ENCODE measurements at regions of chr6 and their contacts with region 1.

Region 1: GRCh38 chr6:157013649-157014304 is 236.6 kb downstream of the ARID1B start:
- DNase-seq: no peak
- ATAC-seq: no peak

Region 2: DNA sequence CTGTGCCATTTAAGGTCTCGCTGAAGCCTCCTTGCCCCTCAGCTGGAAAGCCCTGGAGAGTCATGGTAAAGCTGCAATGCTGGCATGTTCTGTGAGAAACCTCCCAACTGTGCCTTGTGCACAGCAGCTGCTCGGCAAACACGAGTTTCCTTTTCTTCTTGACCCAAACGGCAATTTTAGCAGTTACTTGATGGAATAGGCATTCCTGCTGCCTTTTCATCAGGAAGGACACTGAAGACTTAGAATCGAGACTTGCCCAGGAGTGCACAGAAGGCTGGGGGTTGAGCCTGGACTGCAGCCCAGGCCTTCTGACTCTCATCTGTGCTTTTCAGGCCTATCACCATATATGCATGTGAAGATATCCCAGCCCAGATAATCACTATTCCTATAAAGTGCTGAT is 1778.7 kb before region 1 on chr6:
- intact Hi-C with region 1: no loop called
- DNase-seq: no peak
- ATAC-seq: no peak

Region 3: DNA sequence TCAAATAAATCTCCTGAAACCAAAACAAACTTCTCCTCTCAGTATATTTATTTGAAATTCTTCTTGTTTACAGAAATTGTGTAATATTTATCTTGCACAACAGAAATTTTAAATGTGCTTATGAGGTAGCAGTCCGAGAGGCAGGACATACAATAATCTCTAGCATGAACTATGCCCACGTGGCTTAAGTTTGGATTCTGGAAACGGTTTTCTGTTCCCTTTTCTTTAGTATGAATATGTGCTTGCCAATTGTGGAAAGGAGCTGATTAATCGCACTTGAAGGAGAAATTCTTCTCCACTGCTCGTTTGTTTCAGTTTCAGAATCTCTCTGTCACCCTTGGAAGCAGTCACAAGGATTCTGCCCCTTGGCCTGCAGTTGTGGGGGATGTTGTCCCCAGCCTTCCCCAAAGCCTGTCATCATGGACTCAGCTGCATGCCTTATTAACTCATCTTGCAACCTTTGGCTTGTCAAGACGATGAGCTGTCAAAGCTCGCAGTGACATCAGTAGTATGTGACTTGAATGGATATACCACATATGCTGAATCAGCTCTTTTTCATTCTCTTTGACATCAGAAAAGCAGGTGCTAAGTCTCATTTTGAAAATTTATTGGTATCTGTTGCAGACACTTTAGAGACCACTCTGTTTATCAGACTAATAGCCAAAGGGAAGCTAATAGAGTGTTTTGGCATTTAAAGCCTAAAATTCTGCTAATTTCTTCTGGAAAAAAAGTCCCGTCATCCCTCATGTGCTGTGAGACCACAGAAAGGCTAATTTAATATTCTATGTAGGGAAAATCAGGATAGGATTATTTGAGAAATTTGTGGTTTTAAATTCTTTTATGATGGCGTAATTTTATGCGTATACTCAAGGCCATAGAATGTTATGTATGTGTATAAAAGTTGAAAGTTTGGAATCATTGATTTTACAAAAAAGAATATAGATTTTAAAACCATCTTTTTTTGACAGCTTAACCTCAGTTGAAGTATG is 49.8 kb before region 1 on chr6:
- intact Hi-C with region 1: loop called (anchors 1 kb)
- DNase-seq: no peak
- ATAC-seq: peak; percentile 71

Measured in sciatic nerve (tissue), 2 donors.